Panc1 (cell line): ENCODE measurements at regions of chr14 and their contacts with region 1.

Region 1: GRCh38 chr14:64928239-64929013 is 14.1 kb downstream of the GPX2 start:
- DNase-seq: no peak
- ATAC-seq: no peak
- H3K4me3 ChIP-seq: no peak overlapping the region
- H3K27ac ChIP-seq: no peak overlapping the region
- H3K4me1 ChIP-seq: no peaks in the 10 kb centered on the region
- H3K27me3 ChIP-seq: no peaks in the 10 kb centered on the region
- CTCF ChIP-seq: no peak

Region 2: DNA sequence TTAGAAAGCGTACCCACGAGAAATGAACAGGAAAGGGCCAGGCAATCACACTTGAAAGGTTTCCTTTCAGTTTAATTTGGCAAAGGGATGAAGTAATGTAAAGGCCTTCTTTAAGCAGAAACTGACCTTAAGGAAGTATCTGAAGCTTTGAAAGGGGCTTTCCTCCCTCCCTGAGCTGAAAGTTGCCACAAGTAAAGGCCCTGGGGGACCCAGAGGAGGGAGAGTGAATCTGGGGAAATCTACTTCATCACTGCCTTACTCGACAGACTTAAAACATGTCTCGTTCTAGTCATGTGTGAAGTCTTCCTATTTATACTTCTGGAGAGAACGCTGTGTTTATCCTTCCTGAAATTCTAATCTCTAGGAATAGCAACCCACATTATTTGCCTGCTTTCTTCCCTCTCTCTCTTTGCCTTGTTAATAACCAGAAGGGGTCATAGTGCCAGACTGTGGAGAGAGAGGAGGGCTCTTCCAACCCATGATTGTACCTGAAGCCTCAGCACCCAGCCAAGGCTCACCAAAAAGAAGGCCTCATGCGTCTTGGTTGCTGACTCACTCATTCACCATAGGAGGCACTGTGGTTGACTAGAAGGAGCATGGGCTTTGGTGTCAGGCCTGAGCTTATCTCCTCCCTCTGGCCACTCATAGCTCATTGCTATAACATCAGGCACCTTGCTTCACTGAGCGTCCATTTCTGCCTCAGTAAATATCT is 24.3 kb after region 1 on chr14:
- CTCF ChIA-PET with region 1: no interaction called
- POLR2A ChIA-PET with region 1: no interaction called
- in situ Hi-C with region 1: no loop called
- intact Hi-C with region 1: no loop called
- DNase-seq: no peak
- ATAC-seq: no peak
- H3K4me3 ChIP-seq: no peak overlapping the region
- H3K27ac ChIP-seq: no peak overlapping the region
- H3K4me1 ChIP-seq: no peaks in the 10 kb centered on the region
- H3K27me3 ChIP-seq: no peaks in the 10 kb centered on the region
- CTCF ChIP-seq: no peak

Region 3: GRCh38 chr14:65019944-65020566 is 91.6 kb after region 1 on chr14:
- CTCF ChIA-PET with region 1: no interaction called
- POLR2A ChIA-PET with region 1: interaction called, 16 read pairs
- in situ Hi-C with region 1: no loop called
- intact Hi-C with region 1: no loop called
- DNase-seq: peak; percentile 10
- ATAC-seq: peak; percentile 80; the same call in 1 of the 2 replicates
- H3K4me3 ChIP-seq: no peak overlapping the region
- H3K27ac ChIP-seq: no peak overlapping the region
- H3K4me1 ChIP-seq: no peaks in the 10 kb centered on the region
- H3K27me3 ChIP-seq: no peaks in the 10 kb centered on the region
- CTCF ChIP-seq: peak; percentile 69

Region 4: DNA sequence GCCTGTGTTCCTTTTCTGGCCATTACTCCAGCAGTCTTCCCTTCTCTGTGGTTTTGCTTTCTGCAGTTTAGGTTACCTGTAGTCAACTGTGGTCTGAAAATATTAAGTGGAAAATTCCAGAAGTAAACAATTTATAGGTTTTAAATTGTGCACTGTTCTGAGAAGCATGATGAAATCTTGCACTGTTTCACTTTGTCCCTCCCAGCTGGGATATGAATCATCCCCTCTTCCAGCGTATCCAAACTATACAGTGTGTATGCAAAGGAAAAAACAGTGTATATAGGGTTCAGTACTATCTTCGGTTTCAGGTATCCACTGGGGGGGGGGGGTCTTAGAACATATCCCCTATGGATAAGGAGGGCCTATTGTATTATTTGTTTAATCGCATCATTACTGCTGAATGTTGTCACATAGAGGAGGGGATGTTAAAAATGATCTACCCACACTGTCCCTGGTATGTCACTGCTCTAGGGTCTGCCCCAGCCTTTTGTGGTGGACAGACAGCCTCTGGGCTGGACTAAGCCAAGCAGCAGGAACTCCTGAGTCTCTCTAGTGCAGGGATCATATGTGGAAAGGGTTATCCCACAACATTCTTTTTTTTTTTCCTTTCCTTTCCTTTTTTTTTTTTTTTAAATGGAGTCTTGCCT is 283.0 kb after region 1 on chr14:
- CTCF ChIA-PET with region 1: no interaction called
- POLR2A ChIA-PET with region 1: no interaction called
- in situ Hi-C with region 1: no loop called
- intact Hi-C with region 1: no loop called
- DNase-seq: no peak
- ATAC-seq: peak; percentile 60; the same call in 1 of the 2 replicates
- H3K4me3 ChIP-seq: no peak overlapping the region
- H3K27ac ChIP-seq: no peak overlapping the region
- H3K4me1 ChIP-seq: no peaks in the 10 kb centered on the region
- H3K27me3 ChIP-seq: no peaks in the 10 kb centered on the region
- CTCF ChIP-seq: no peak